MCF 10A (cell line): ENCODE measurements at regions of chr20 and their contacts with region 1.

Region 1: GRCh38 chr20:22403632-22404361 is 180.6 kb downstream of the FOXA2 start:
- DNase-seq: no peak
- H3K4me3 Mint-ChIP-seq: peak overlapping the region; percentile 20
- H3K27ac Mint-ChIP-seq: peak overlapping the region; percentile 5
- H3K4me1 Mint-ChIP-seq: peaks cover 26% of the 10 kb centered on the region
- H3K27me3 Mint-ChIP-seq: no peaks in the 10 kb centered on the region
- CTCF ChIP-seq: no peak

Region 2: DNA sequence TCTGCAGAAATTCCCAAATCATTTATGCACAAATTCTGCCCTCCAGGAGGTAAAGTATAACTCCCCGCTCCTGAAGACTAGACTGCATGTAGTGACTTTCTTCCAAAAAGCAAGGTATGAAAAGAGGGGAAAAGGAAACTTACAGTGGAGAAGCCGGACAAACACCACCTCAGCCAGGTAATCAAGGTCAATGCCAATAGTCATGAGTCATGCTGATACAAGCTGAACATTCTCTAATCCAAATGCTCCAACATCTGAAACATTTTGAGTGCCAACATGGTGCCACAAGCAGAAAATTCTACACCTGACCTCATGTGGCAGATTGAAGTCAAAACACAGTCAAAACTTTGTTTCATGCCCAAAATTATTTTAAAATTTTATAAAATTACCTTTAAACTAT is 14.9 kb after region 1 on chr20:
- CTCF ChIA-PET with region 1: interaction called, 4 read pairs
- POLR2A ChIA-PET with region 1: interaction called, 11 read pairs
- intact Hi-C with region 1: no loop called
- DNase-seq: peak; percentile 18
- H3K4me3 Mint-ChIP-seq: no peak overlapping the region
- H3K27ac Mint-ChIP-seq: no peak overlapping the region
- H3K4me1 Mint-ChIP-seq: no peaks in the 10 kb centered on the region
- H3K27me3 Mint-ChIP-seq: no peaks in the 10 kb centered on the region
- CTCF ChIP-seq: no peak

Region 3: GRCh38 chr20:22453239-22454080 is 49.7 kb after region 1 on chr20:
- CTCF ChIA-PET with region 1: interaction called, 11 read pairs
- POLR2A ChIA-PET with region 1: no interaction called
- intact Hi-C with region 1: no loop called
- DNase-seq: peak; percentile 67
- H3K4me3 Mint-ChIP-seq: no peak overlapping the region
- H3K27ac Mint-ChIP-seq: peak overlapping the region; percentile 31
- H3K4me1 Mint-ChIP-seq: no peaks in the 10 kb centered on the region
- H3K27me3 Mint-ChIP-seq: no peaks in the 10 kb centered on the region
- CTCF ChIP-seq: peak; percentile 74